CD8-positive, alpha-beta T cell (primary cell): ENCODE measurements at regions of chr5 and their contacts with region 1.

Region 1: DNA sequence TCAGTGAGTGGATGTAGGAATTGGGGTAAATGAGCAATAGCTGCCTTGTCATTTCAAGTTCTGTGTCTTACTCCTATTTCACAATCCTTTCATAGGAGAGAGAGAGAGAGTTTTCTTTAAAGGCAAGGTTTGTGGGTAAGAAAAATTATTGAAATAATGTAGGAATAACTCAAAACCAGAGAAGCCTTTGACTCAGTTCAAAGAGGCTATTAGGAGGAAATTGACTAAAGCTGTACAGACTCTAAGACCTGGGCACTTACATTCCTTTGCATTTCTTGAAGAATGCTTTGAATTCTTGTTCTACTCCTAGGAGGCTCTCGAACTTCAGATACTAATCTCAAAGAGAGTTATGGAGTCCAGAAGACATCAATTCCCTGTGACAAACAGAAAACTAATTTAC is 257.1 kb downstream of the FBXL7 start:
- DNase-seq: no peak
- ATAC-seq: no peak
- H3K4me3 ChIP-seq: no peak overlapping the region
- H3K4me3 Mint-ChIP-seq: no peak overlapping the region
- H3K27ac ChIP-seq: no peak overlapping the region
- H3K27ac Mint-ChIP-seq: no peak overlapping the region
- H3K4me1 ChIP-seq: no peaks in the 10 kb centered on the region
- H3K4me1 Mint-ChIP-seq: no peaks in the 10 kb centered on the region
- H3K27me3 ChIP-seq: no peaks in the 10 kb centered on the region
- H3K27me3 Mint-ChIP-seq: no peaks in the 10 kb centered on the region
- CTCF ChIP-seq: no peak

Region 2: GRCh38 chr5:15737871-15738664 is 19.0 kb before region 1 on chr5:
- CTCF ChIA-PET with region 1: no interaction called
- POLR2A ChIA-PET with region 1: no interaction called
- intact Hi-C with region 1: loop called in 1 of 2 experiments (anchors 1 kb)
- DNase-seq: no peak
- ATAC-seq: no peak
- H3K4me3 ChIP-seq: no peak overlapping the region
- H3K4me3 Mint-ChIP-seq: no peak overlapping the region
- H3K27ac ChIP-seq: no peak overlapping the region
- H3K27ac Mint-ChIP-seq: no peak overlapping the region
- H3K4me1 ChIP-seq: no peaks in the 10 kb centered on the region
- H3K4me1 Mint-ChIP-seq: no peaks in the 10 kb centered on the region
- H3K27me3 ChIP-seq: no peaks in the 10 kb centered on the region
- H3K27me3 Mint-ChIP-seq: no peaks in the 10 kb centered on the region
- CTCF ChIP-seq: no peak